ENCODE measurements at regions of chr1 and their contacts with region 1.

Region 1: DNA sequence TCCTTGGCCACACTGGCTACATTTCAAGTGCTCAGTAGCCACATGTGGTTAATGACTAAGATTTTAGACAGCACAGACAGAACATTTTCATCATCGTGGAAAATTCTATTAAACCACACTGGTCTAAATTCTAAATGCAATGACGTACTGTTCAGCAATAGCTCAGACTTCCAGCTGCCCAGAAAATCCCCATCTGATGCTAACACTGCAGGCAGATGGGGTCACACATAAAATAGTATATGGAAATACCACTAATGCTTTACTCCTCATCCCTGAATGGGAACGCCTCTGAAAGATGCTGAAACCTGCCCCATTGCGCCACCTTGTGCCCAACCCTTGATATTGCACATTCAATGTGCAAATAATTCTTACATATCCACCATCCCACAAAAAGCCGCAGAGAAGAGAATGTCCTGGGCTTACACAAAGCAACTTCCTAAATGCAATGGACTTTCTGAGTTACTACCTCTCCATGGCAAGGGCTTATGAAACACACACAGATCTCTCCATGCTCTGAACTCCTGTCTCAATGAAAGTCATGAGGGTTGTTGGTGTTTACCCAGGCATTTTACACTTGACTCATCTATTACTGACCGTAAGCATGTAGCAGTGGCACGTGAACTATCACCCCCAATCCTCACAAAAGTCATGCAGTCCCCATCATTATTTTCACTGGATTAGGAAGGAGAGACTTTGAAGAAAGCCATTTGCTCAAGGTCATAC is 20.3 kb upstream of the SLC5A9 start:
- DNase-seq: peak in 2 of 3 donors; percentile 68 to 73
- ATAC-seq: peak; percentile 87
- H3K4me3 ChIP-seq: no peak overlapping the region
- H3K4me1 ChIP-seq: peaks cover 3% of the 10 kb centered on the region
- CTCF ChIP-seq: peak; percentile 72

Region 2: GRCh38 chr1:48109390-48110013 is 92.7 kb before region 1 on chr1:
- intact Hi-C with region 1: loop called (anchors 5 to 10 kb)
- DNase-seq: peak in 1 of 3 donors; percentile 77
- ATAC-seq: peak; percentile 57
- H3K4me3 ChIP-seq: no peak overlapping the region
- H3K4me1 ChIP-seq: no peaks in the 10 kb centered on the region
- CTCF ChIP-seq: peak; percentile 56

Measured in mucosa of descending colon (tissue), 3 donors.